Activated CD4-positive, alpha-beta T cell treated with anti-CD3 and anti-CD28 coated beads for 36 hours (primary cell): ENCODE measurements at regions of chr1 and their contacts with region 1.

Region 1: DNA sequence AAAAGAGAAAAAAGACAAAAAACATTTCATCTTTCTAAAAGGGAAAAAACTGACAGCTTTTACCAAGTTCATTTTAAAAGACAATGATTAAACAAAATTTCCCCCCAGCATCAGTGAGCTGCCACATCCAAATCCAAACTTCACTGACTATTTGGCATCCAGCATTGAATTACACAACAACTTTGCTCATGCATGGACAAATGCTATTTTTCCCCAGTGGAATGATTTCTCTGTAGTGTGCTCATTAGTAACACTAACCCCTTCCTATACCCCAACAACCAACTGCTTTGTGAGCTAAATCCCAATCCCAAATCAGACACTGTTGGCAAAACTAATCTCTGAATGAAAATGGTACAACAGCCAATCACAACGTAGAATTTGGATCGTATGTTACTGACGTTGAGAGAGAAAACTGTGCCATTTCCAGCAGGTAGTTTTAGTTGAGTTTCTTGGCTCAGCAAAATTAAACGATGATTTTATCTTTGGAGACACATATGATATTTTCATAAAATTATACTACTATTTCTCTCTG is 37.9 kb downstream of the PIK3R3 start:
- DNase-seq: no peak
- ATAC-seq: no peak
- H3K4me3 Mint-ChIP-seq: no peak overlapping the region
- H3K27ac Mint-ChIP-seq: no peak overlapping the region
- H3K4me1 Mint-ChIP-seq: peaks cover 18% of the 10 kb centered on the region
- H3K27me3 Mint-ChIP-seq: peaks cover 6% of the 10 kb centered on the region

Region 2: DNA sequence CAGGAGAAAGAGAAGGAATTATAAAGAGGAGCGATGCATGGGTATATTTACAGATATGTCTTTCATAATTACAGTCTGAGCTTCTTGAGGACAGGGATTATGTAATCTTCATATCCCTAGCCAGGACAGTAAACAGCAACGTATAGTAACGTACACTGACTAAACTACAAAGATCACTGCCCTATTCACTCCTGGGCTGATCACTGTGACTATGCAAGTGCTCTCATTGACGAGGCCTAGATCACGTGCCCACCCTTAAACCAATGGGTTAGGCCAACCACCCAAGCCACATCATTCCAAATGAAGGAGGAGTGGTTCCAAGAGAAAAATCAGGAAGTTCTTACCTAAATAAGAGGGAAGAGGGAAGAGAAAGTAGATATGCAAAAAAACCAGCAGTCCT is 19.4 kb after region 1 on chr1:
- CTCF ChIA-PET with region 1: no interaction called
- POLR2A ChIA-PET with region 1: interaction called, 12 read pairs
- intact Hi-C with region 1: no loop called
- DNase-seq: no peak
- ATAC-seq: no peak
- H3K4me3 Mint-ChIP-seq: no peak overlapping the region
- H3K27ac Mint-ChIP-seq: no peak overlapping the region
- H3K4me1 Mint-ChIP-seq: peaks cover 2% of the 10 kb centered on the region
- H3K27me3 Mint-ChIP-seq: no peaks in the 10 kb centered on the region